ENCODE measurements at regions of chr5 and their contacts with region 1.

Region 1: DNA sequence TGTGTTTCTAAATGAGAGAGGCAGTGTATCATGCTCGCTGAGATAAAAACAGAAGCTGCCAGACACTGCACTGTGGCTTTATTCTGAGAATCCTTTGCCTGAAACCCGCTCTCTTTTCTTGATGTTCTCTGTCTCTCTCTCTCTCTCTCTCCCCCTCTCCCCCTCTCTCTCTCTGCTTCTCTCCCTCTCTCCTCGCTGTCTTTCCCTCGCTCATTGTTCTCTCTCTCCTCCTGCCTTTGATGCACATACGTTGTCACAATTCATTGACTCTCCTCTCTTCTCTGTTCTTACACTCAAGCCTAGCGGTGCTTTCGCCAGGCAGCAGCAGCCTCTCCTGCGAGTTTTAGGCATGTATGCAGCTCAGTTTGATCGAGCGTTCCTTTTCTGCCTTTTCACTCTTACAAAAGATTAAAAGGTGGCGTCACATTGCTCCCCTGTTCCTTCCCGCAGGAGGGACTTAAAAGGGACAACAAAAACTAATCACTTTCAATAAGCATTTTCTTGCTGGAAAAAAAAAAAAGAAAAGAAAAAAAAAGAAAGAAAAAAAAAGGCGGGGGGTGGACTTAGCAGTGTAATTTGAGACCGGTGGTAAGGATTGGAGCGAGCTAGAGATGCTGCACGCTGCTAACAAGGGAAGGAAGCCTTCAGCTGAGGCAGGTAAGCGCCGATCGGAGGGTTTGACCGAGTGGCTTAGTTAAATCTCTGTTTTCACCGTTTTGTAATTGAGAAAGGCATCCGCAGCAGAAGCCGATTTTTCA is 717.9 kb upstream of the WWC1 start:
- DNase-seq: peak; percentile 79
- H3K4me3 Mint-ChIP-seq: peak overlapping the region; percentile 50
- H3K27ac Mint-ChIP-seq: no peak overlapping the region
- H3K4me1 Mint-ChIP-seq: peaks cover 26% of the 10 kb centered on the region
- H3K27me3 Mint-ChIP-seq: peaks cover 88% of the 10 kb centered on the region
- CTCF ChIP-seq: no peak

Region 2: DNA sequence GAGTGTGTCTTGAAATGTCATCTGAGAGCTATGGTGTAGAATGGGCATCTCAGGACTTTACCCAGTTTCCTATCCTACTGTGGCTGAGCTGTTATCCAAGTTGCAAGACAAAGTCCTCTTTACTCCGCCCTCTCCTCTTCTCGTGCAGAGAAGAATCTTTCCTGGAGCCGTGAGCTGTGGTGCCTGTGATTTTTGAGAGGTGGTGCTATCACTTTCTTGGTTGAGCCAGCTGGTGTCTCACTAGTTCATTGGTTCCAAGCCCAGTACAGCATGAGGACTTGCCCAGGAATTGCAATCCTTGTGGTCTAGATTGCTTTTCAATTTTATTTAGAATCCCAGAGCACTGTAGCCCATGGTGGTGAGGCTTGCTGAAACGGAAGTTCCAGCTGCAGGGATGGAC is 1767.8 kb before region 1 on chr5:
- CTCF ChIA-PET with region 1: no interaction called
- POLR2A ChIA-PET with region 1: no interaction called
- intact Hi-C with region 1: loop called (anchors 5 kb)
- DNase-seq: peak; percentile 47
- H3K4me3 Mint-ChIP-seq: no peak overlapping the region
- H3K27ac Mint-ChIP-seq: no peak overlapping the region
- H3K4me1 Mint-ChIP-seq: no peaks in the 10 kb centered on the region
- H3K27me3 Mint-ChIP-seq: no peaks in the 10 kb centered on the region
- CTCF ChIP-seq: peak; percentile 21

Region 3: GRCh38 chr5:167472566-167473108 is 100.9 kb before region 1 on chr5:
- CTCF ChIA-PET with region 1: no interaction called
- POLR2A ChIA-PET with region 1: no interaction called
- intact Hi-C with region 1: no loop called
- DNase-seq: no peak
- H3K4me3 Mint-ChIP-seq: no peak overlapping the region
- H3K27ac Mint-ChIP-seq: no peak overlapping the region
- H3K4me1 Mint-ChIP-seq: no peaks in the 10 kb centered on the region
- H3K27me3 Mint-ChIP-seq: no peaks in the 10 kb centered on the region
- CTCF ChIP-seq: no peak

Region 4: DNA sequence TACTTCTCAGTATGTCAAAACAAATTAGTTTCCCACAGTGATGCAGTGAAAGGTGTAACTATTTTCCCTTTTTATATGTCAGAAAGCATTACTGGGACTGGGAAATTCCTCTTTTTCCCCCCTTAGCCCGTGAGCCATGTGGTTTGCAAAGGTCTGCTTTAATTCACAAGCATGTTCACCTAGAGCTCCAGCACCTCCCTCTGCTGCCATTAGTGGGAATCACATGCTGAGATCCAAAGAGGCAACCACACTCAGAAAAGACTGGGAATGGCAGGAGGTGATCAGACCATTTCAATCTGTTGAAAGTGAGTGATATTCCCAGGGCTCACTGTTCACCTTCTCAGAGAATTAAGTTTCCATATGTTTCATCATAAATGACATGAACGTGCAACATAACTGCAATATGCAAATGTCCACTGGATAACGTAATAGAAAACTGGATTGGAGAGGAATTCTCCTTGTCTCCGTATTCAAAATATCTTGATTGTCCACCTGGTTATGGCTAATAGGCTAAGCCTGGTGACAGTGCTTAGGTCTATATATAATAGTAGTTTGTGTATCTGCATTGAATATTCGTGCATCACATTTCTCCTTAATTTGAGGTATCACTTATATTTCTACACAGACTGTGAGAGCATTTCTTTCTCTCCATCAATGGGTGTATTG is 14.4 kb after region 1 on chr5:
- CTCF ChIA-PET with region 1: interaction called, 38 read pairs
- POLR2A ChIA-PET with region 1: interaction called, 11 read pairs
- intact Hi-C with region 1: no loop called
- DNase-seq: peak; percentile 78
- H3K4me3 Mint-ChIP-seq: no peak overlapping the region
- H3K27ac Mint-ChIP-seq: no peak overlapping the region
- H3K4me1 Mint-ChIP-seq: peaks cover 10% of the 10 kb centered on the region
- H3K27me3 Mint-ChIP-seq: no peaks in the 10 kb centered on the region
- CTCF ChIP-seq: peak; percentile 65

Region 5: DNA sequence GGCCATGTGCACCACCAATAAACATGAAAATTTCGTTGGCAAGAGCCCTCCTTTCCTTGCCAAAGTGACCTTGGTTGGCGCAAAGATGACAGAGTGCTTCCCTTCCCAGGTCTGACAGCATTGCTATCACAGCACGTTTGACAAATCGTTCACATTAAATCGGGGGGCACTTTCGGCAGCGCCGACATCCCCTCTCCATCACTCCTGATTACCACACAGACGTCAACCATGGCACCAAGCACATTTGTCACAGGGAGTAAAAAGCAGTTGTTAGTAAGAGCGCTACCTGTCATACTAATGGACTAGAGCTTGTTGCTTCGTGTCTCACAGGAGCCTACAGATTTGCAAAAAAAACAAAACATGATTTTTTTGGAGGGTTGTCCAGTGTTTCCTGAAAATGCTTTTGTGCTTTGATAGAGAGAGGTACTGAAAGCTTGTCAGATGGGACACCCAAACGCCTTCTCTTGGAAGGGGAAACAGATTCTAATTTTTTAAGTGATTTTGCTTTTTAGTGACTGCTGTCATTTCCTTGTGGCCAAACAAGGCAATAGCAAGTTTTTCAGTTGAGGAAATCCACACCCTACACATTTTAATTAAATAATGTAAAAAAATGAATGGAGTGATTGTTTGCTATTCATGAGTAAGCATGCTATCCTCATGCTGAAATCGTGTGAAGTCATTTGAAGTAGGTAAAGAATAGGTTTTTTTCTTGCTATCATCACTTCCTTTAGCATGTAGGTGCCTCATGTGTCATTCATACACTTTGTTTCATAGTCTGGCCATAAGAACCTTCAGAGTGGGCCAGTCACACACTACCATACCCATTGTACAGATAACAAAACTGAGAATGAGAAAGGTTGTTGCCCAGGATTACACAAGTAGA is 35.1 kb after region 1 on chr5:
- CTCF ChIA-PET with region 1: interaction called, 4 read pairs
- POLR2A ChIA-PET with region 1: no interaction called
- intact Hi-C with region 1: loop called (anchors 1 kb)
- DNase-seq: no peak
- H3K4me3 Mint-ChIP-seq: no peak overlapping the region
- H3K27ac Mint-ChIP-seq: no peak overlapping the region
- H3K4me1 Mint-ChIP-seq: no peaks in the 10 kb centered on the region
- H3K27me3 Mint-ChIP-seq: no peaks in the 10 kb centered on the region
- CTCF ChIP-seq: no peak